Aorta (tissue), 5 donors: ENCODE measurements at regions of chr2 and their contacts with region 1.

Region 1: GRCh38 chr2:96739633-96740428 is at the start of gene LMAN2L:
- DNase-seq: peak; percentile 98 to 99
- ATAC-seq: peak; percentile 98
- H3K4me3 ChIP-seq: peak within 1 kb of the TSS; percentile 56 to 79
- H3K27ac ChIP-seq: peak within 1 kb of the TSS in 1 of 2 donors; percentile 8
- H3K4me1 ChIP-seq: no peaks in the 10 kb centered on the region
- H3K27me3 ChIP-seq: no peaks in the 10 kb centered on the region
- total RNA-seq, gene LMAN2L: 11.3 to 15.7 TPM

Region 2: DNA sequence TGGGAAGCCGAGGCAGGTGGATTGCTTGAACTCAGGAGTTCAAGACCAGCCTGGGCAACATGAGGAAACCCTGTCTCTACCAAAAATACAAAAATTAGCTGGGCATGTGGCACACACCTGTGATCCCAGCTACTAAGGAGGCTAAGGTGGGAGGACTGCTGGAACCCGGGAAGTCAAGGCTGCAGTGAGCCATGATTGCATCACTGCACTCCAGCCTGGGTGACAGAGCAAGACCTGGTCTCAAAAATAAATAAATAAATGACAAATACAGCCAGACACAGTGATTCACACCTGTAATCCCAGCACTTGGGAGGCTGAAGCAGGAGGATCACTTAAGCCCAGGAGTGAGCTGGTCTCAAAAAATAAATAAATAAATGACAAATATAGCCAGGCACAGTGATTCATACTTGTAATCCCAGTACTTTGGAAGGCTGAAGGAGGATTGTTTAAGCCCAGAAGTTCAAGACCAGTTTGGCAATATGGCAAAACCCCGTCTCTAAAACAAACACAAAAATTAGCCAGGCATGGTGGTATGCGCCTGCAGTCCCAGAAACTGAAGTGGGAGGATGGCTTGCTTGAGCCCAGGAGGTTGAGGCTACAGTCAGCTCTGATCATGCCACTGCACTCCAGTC is 107.9 kb before region 1 on chr2:
- intact Hi-C with region 1: loop called (anchors 5 kb)
- DNase-seq: no peak
- ATAC-seq: peak; percentile 33
- H3K4me3 ChIP-seq: no peak overlapping the region
- H3K27ac ChIP-seq: peak overlapping the region in 1 of 2 donors; percentile 64
- H3K4me1 ChIP-seq: no peaks in the 10 kb centered on the region
- H3K27me3 ChIP-seq: no peaks in the 10 kb centered on the region

Region 3: GRCh38 chr2:96760036-96760985 is 20.5 kb after region 1 on chr2 and contains the start of gene CNNM4:
- intact Hi-C with region 1: loop called in 1 of 2 experiments (anchors 2 kb)
- DNase-seq: peak; percentile 97 to 98
- ATAC-seq: peak; percentile 95
- H3K4me3 ChIP-seq: peak within 1 kb of the TSS; percentile 3 to 72
- H3K27ac ChIP-seq: peak within 1 kb of the TSS in 1 of 2 donors; percentile 22
- H3K4me1 ChIP-seq: peaks cover 0 to 5% of the 10 kb centered on the region in 2 donors
- H3K27me3 ChIP-seq: peaks cover 0 to 1% of the 10 kb centered on the region in 2 donors
- total RNA-seq, gene CNNM4: 7.8 to 8.1 TPM

Region 4: DNA sequence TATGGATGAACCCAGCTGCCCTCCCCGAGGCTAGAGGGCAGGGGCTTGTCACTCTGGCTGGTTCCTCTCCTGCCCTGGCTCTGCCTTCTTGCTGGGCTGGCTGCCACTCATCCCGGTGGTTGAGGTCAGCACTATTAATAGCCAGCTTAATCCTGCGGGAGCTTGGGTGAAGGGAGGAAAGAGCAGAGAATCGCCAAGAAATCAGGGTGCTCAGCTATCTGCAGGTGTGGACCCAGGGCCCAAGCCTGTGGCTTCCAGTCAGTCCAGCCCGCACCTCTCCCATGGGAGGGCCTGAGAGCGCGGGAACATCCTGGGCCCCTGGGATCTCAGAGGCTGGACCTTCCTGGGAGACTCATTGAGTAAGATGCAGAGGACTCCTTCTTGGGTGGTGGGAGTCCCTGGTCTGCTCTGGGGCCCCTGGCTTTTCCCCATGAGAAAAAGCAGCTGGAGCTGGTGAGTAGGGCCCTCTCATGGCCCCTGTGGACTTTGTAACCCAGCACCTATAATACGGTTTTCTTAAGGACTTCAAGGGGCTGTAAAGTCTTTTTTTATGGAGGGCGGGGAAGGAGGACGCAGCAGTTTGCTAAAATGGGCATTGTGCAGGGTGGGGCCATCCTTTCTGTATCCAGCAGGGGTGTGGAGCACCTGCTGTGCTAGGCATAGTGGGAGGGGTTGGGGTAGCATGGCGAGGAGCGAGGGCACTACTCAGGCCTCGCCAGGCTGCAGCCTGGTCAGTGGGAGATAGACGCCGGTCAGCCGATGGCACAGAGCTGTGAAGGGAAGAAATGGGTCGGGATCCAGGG is 48.8 kb after region 1 on chr2:
- intact Hi-C with region 1: loop called in 1 of 2 experiments (anchors 10 kb)
- DNase-seq: peak; percentile 70 to 87
- ATAC-seq: peak; percentile 84
- H3K4me3 ChIP-seq: no peak overlapping the region
- H3K27ac ChIP-seq: peak overlapping the region in 1 of 2 donors; percentile 44
- H3K4me1 ChIP-seq: peaks cover 0 to 2% of the 10 kb centered on the region in 2 donors
- H3K27me3 ChIP-seq: no peaks in the 10 kb centered on the region